Activated naive CD4-positive, alpha-beta T cell treated with anti-CD3 and anti-CD28 coated beads for 36 hours (primary cell): ENCODE measurements at regions of chr5 and their contacts with region 1.

Region 1: GRCh38 chr5:140351609-140352334 is 5.4 kb upstream of the HBEGF start:
- DNase-seq: peak; percentile 77
- H3K4me3 Mint-ChIP-seq: no peak overlapping the region
- H3K27ac Mint-ChIP-seq: no peak overlapping the region
- H3K4me1 Mint-ChIP-seq: peaks cover 5% of the 10 kb centered on the region
- H3K27me3 Mint-ChIP-seq: peaks cover 9% of the 10 kb centered on the region

Region 2: GRCh38 chr5:140244525-140245025 is 107.2 kb before region 1 on chr5:
- CTCF ChIA-PET with region 1: interaction called, 634 read pairs
- intact Hi-C with region 1: loop called (anchors 1 kb)
- DNase-seq: peak; percentile 91
- H3K4me3 Mint-ChIP-seq: no peak overlapping the region
- H3K27ac Mint-ChIP-seq: peak overlapping the region; percentile 65
- H3K4me1 Mint-ChIP-seq: peaks cover 27% of the 10 kb centered on the region
- H3K27me3 Mint-ChIP-seq: no peaks in the 10 kb centered on the region

Region 3: GRCh38 chr5:140251527-140251973 is 100.2 kb before region 1 on chr5:
- CTCF ChIA-PET with region 1: interaction called, 634 read pairs
- intact Hi-C with region 1: no loop called
- DNase-seq: peak; percentile 87
- H3K4me3 Mint-ChIP-seq: no peak overlapping the region
- H3K27ac Mint-ChIP-seq: peak overlapping the region; percentile 68
- H3K4me1 Mint-ChIP-seq: peaks cover 33% of the 10 kb centered on the region
- H3K27me3 Mint-ChIP-seq: no peaks in the 10 kb centered on the region

Region 4: DNA sequence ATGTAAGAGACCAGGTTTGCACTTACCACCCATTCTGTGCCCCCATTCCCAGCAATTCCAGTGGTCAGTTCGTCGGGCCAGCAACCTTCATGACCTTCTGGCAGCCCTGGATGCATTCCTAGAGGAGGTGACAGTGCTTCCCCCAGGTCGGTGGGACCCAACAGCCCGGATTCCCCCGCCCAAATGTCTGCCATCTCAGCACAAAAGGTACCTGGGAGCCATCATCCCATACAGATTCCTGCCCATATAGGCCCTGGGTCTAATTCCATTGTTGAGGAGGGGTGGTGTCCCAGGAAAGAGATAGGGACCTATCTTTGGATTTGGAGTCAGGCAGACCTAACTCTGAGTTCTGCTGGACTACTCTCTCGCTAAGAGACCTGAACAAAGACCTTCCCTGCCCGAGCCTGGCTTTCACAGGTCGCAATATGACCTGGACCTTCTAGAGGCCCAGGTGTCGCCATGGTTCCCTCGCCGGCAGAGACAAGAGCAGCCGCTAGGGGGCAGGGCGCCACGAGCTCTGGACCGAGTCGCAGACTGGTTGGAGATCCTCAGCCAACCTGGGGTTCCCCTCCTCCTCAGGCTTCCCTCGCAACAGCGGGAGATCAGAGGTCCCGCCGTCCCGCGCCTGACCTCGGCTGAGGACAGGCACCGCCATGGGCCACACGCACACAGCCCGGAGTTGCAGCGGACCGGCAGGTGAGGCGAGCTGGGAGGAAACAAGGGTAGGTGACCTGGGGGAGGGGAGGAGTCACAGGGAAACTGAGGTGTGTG is 11.3 kb after region 1 on chr5:
- CTCF ChIA-PET with region 1: interaction called, 16 read pairs
- intact Hi-C with region 1: no loop called
- DNase-seq: peak; percentile 92
- H3K4me3 Mint-ChIP-seq: peak overlapping the region; percentile 70
- H3K27ac Mint-ChIP-seq: no peak overlapping the region
- H3K4me1 Mint-ChIP-seq: peaks cover 2% of the 10 kb centered on the region
- H3K27me3 Mint-ChIP-seq: no peaks in the 10 kb centered on the region

Region 5: DNA sequence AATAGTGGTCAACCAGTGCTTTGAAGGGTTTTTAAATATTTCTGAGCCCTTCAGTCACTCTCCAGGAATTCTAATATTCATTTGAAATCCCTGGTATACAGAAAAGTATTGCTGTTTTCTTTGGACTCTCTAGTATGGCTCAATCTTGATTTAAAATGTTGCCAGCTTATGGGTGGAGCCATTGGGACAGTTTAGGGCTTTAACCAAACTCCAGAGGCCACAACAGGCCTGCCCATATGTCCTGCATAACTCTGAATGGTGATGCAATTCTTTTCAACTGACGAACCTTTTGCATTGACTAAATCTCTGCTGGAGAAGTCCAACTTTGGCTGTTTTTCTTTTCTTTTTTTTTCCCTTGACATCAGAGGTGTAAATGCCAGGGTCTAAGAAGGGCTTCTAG is 39.5 kb after region 1 on chr5:
- CTCF ChIA-PET with region 1: interaction called, 10 read pairs
- intact Hi-C with region 1: no loop called
- DNase-seq: no peak
- H3K4me3 Mint-ChIP-seq: no peak overlapping the region
- H3K27ac Mint-ChIP-seq: no peak overlapping the region
- H3K4me1 Mint-ChIP-seq: no peaks in the 10 kb centered on the region
- H3K27me3 Mint-ChIP-seq: no peaks in the 10 kb centered on the region